Transverse colon (tissue), 4 donors: ENCODE measurements at regions of chr10 and their contacts with region 1.

Region 1: GRCh38 chr10:6401562-6402348 is 178.3 kb downstream of the PRKCQ start:
- DNase-seq: peak; percentile 73
- H3K4me3 ChIP-seq: peak overlapping the region in 3 of 4 donors; percentile 24 to 49 (median 27)
- H3K27ac ChIP-seq: peak overlapping the region in 3 of 4 donors; percentile 18 to 42 (median 30)
- H3K4me1 ChIP-seq: peaks cover 0 to 11% (median 2%) of the 10 kb centered on the region in 4 donors
- H3K27me3 ChIP-seq: no peaks in the 10 kb centered on the region
- CTCF ChIP-seq: peak; percentile 66 to 89 (median 73)
- EP300 ChIP-seq: no peak
- POLR2A ChIP-seq: no peak

Region 2: GRCh38 chr10:6108603-6109443 is 292.9 kb before region 1 on chr10:
- in situ Hi-C with region 1: loop called (anchors 5 to 25 kb)
- intact Hi-C with region 1: loop called (anchors 5 kb)
- DNase-seq: no peak
- H3K4me3 ChIP-seq: no peak overlapping the region
- H3K27ac ChIP-seq: no peak overlapping the region
- H3K4me1 ChIP-seq: peaks cover 0 to 6% (median 0%) of the 10 kb centered on the region in 4 donors
- H3K27me3 ChIP-seq: no peaks in the 10 kb centered on the region
- CTCF ChIP-seq: peak; percentile 72 to 81 (median 73)
- EP300 ChIP-seq: no peak
- POLR2A ChIP-seq: no peak

Region 3: DNA sequence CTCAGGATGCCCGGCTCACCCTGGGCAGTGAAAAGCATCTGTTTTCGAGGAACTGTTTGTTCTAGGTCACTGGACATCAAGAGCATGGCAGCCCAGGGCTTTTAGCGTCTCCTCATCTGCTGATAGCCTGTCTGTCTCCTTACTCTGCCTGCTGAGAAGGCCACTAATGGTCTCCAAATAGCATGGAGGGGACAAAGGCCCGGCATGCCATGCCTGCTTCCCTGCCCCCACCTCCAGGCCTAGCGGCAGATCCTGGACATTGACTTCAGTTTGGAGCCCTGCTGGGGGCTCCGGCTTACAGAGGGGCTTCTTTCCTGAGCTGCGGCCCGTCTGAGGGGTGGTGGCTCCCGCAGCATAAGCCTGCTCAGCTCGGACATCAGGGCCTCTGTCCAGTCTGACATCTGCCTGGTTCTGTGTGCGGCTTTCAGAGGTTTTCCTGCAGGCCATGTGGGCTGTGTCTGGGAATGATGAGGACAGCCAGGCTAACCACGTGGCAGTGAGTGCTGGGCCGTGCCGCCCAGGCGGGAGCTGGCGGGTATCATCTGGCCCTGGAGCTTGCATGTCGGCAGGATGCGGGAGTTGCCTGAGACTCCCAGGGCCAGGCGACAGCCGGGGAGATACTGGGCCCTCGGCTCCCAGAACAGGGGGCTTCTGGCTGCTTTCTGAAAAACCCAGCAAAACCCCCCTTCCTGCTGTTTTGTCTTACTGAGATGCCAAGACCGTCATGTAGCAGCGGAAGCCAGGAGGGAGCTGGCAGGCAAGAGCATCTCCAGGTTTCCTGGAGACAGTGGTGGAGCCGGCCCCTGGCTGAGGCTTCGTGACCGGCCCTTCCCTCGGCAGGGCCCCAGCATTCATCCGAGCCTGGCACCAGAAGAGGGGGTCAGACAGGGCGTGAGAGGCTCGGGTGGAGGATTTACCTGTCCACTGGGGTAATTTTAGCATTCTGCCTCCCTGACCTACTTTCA is 189.8 kb before region 1 on chr10:
- in situ Hi-C with region 1: loop called in 1 of 4 experiments (anchors 10 kb)
- intact Hi-C with region 1: no loop called
- DNase-seq: no peak
- H3K4me3 ChIP-seq: no peak overlapping the region
- H3K27ac ChIP-seq: peak overlapping the region; percentile 13 to 60 (median 39)
- H3K4me1 ChIP-seq: peaks cover 0 to 14% (median 4%) of the 10 kb centered on the region in 4 donors
- H3K27me3 ChIP-seq: no peaks in the 10 kb centered on the region
- CTCF ChIP-seq: no peak
- EP300 ChIP-seq: no peak
- POLR2A ChIP-seq: no peak

Region 4: DNA sequence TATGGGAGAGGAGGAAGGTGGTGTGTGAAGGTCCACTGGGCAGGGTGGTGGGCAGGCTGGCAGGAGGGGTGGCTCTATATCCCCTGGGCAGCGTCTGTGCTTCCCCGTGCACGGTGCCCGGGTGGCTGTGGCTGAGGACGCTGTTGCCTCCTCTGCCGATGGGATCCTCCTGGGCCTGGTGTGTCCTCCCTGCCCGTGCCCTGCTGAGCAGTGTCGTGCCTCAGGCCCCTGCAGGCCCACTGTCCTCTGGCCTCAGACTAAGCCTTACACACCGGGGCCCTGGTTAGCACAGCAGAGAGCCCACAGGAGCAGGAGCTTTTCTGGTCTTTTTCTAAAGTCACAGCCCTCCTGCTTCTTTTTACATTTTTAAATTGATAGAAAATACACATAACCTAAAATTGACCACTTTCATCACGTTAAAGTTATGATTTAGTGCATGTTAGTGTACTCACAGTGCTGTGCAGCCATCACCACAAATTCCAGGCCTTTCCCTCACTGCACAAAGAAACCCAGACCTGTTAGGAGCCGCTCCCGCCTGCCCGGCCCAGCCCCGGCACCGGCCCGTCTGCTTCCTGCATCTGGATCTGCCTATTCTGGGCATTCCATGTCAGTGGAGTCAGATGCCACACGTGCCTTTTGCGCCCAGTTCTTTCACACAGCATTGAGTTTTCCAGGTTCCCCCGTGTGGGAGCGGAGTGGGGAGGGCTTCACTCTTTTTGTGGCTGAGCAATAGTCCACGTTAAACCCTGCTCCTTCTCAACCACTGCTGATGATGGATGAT is 179.6 kb before region 1 on chr10:
- in situ Hi-C with region 1: loop called in 3 of 4 experiments (anchors 10 to 25 kb)
- intact Hi-C with region 1: no loop called
- DNase-seq: no peak
- H3K4me3 ChIP-seq: no peak overlapping the region
- H3K27ac ChIP-seq: no peak overlapping the region
- H3K4me1 ChIP-seq: no peaks in the 10 kb centered on the region
- H3K27me3 ChIP-seq: no peaks in the 10 kb centered on the region
- CTCF ChIP-seq: no peak
- EP300 ChIP-seq: no peak
- POLR2A ChIP-seq: no peak

Region 5: DNA sequence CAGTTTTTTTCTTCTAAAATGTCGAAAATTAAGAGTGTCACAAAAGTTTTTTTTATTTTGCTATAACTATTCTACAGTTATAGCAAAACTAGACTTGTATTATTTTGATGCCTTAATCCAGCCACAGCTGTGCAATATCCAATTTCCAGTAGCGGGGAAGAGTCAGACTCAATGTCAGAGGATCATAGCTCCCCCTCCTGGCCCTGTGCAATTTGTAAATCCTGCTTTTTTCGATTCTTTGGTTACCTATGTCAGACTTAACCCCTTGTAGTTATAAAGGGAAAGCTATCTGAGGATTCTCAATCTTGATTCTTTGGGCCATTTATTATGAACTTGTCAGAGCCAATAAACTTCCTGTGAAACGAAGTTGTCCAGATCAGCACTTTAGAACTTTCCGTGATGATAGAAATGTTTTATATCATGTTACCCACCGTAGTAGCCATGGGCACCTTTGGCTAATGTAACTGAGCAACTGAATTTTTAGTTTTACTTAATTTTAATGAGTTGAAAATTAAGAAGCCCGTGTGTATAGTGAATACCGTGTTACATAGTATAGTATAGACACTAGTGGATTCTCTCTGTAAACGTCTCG is 266.0 kb after region 1 on chr10:
- in situ Hi-C with region 1: loop called in 1 of 4 experiments (anchors 25 kb)
- intact Hi-C with region 1: no loop called
- DNase-seq: peak; percentile 9
- H3K4me3 ChIP-seq: no peak overlapping the region
- H3K27ac ChIP-seq: no peak overlapping the region
- H3K4me1 ChIP-seq: no peaks in the 10 kb centered on the region
- H3K27me3 ChIP-seq: peaks cover 13% of the 10 kb centered on the region
- CTCF ChIP-seq: peak; percentile 15 to 34 (median 18)
- EP300 ChIP-seq: no peak
- POLR2A ChIP-seq: no peak